H1 (cell line): ENCODE measurements at regions of chr3 and their contacts with region 1.

Region 1: DNA sequence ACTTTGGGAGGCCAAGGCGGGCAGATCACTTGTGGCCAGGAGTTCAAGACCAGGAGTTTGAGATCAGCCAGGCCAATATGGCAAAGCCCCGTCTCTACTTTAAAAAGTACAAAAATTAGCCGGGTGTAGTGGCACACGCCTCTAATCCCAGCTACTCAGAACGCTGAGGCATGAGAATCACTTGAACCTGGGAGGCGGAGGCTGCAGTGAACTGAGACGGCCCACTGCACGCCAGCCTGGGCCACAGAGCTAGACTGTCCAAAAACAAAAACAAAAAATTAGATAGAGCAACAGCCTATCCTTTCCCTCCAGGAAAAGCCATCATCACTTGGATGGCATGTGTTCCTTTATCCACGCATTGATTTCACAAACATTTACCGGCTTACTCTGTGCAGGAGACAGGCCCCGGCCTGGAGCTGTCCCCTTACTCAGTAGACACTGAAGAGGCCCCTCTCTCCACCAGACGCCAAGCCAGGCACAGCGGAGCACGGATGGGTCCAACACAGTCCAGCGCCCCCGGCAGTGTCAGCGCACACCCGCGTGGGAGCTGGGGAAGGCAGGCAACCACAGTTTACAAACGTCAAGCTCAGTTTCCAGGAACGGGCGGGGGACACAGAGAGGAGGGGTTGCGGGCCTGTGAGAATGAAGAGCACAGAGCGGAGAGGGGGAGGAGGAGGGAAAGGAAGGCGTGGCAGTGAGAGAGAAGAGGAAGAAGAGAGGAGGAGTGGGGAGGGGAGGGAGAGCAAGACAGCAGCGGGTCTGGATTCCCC is 3.1 kb downstream of the GP5 start:
- DNase-seq: peak in 1 of 2 experiments; percentile 65
- H3K4me3 ChIP-seq: peak overlapping the region in 3 of 4 experiments; percentile 46 to 57 (median 51); a peak in 4 of 8 replicates
- H3K27ac ChIP-seq: no peak overlapping the region
- H3K4me1 ChIP-seq: peaks cover 0 to 11% (median 5%) of the 10 kb centered on the region in 4 experiments; a peak in 5 of 7 replicates
- H3K27me3 ChIP-seq: peaks cover 16 to 35% (median 25%) of the 10 kb centered on the region in 4 experiments
- CTCF ChIP-seq: no peak
- EP300 ChIP-seq: no peak
- POLR2A ChIP-seq: no peak
- RAD21 ChIP-seq: no peak

Region 2: DNA sequence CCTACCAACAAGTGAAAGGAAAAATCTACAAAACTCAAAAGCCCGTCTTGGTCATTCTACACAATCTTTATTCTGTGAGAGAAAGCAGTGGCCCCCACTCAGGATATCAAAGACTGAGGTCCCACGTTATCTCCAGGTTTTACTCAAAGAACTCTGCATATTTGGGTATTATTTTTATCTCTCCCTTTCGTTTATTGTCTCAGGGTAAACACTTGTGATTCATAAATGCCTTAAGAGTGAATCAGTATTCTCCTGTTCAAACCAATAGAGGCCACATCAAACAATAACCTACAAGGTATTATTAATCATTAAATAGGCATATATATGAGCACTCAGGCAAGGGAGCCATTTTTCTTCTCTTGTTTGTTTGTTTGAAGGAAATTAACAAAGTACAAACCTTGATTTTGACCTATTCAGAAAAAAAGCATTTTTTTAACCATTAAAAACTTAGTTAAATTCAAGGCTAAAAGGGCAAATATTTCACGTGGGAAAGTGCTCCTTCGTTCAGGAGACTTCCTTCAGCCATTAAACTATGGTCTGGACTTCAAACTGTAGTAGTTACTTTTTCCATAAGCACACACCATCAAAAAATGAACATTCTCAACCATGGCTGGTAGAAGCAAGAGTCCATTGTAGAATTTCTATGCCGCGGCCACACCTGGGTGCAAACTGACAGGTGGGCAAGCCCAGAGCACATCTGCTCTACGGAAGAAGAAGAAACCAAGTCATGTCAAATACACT is 273.9 kb before region 1 on chr3:
- CTCF ChIA-PET with region 1: no interaction called
- POLR2A ChIA-PET with region 1: no interaction called
- DNase-seq: no peak
- H3K4me3 ChIP-seq: no peak overlapping the region
- H3K27ac ChIP-seq: no peak overlapping the region
- H3K4me1 ChIP-seq: no peaks in the 10 kb centered on the region
- H3K27me3 ChIP-seq: peaks cover 0 to 2% (median 0%) of the 10 kb centered on the region in 4 experiments; a peak in 2 of 7 replicates
- CTCF ChIP-seq: no peak
- EP300 ChIP-seq: no peak
- POLR2A ChIP-seq: no peak
- RAD21 ChIP-seq: no peak

Region 3: DNA sequence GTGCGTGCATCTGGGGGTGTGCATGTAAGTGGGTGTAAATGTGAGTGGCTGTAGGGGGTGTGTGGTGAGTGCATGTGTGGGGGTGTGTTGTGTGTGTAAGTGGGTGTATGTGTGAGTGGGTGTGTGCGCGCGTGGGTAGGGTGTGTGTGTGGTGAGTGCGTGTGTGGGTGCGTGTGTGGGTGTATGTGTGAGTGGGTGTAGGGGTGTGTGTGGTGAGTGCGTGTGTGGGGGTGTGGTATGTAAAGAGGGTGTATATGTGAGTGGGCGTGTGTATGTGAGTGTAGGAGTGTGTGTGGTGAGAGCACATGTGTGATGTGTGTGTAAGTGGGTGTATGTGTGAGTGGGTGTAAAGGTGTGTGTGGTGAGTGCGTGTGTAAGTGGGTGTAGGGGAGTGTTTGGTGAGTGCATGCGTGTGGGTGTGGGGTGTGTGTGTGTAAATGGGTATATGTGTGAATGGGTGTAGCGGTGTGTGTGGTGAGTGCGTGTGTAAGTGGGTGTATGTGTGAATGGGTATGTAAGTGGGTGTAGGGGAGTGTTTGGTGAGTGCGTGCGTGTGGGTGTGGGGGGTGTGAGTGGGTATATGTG is 43.9 kb before region 1 on chr3:
- CTCF ChIA-PET with region 1: interaction called, 176 read pairs
- POLR2A ChIA-PET with region 1: no interaction called
- DNase-seq: no peak
- H3K4me3 ChIP-seq: no peak overlapping the region
- H3K27ac ChIP-seq: no peak overlapping the region
- H3K4me1 ChIP-seq: peaks cover 0 to 3% (median 0%) of the 10 kb centered on the region in 4 experiments; a peak in 1 of 7 replicates
- H3K27me3 ChIP-seq: no peaks in the 10 kb centered on the region; a peak in 1 of 7 replicates
- CTCF ChIP-seq: no peak
- EP300 ChIP-seq: no peak
- POLR2A ChIP-seq: no peak
- RAD21 ChIP-seq: no peak

Region 4: GRCh38 chr3:194379651-194380050 is 16.3 kb before region 1 on chr3:
- CTCF ChIA-PET with region 1: interaction called, 15 read pairs
- POLR2A ChIA-PET with region 1: interaction called, 6 read pairs
- DNase-seq: no peak
- H3K4me3 ChIP-seq: no peak overlapping the region
- H3K27ac ChIP-seq: no peak overlapping the region
- H3K4me1 ChIP-seq: peaks cover 0 to 22% (median 10%) of the 10 kb centered on the region in 4 experiments; a peak in 6 of 7 replicates
- H3K27me3 ChIP-seq: no peaks in the 10 kb centered on the region
- CTCF ChIP-seq: no peak
- EP300 ChIP-seq: no peak
- POLR2A ChIP-seq: no peak
- RAD21 ChIP-seq: no peak

Region 5: GRCh38 chr3:194536871-194537637 is 141.1 kb after region 1 on chr3:
- CTCF ChIA-PET with region 1: no interaction called
- POLR2A ChIA-PET with region 1: no interaction called
- DNase-seq: no peak
- H3K4me3 ChIP-seq: no peak overlapping the region
- H3K27ac ChIP-seq: no peak overlapping the region
- H3K4me1 ChIP-seq: no peaks in the 10 kb centered on the region
- H3K27me3 ChIP-seq: no peaks in the 10 kb centered on the region
- CTCF ChIP-seq: no peak
- EP300 ChIP-seq: no peak
- POLR2A ChIP-seq: no peak
- RAD21 ChIP-seq: no peak